IMR-90 (cell line): ENCODE measurements at regions of chr21 and their contacts with region 1.

Region 1: GRCh38 chr21:21232320-21232719 is 234.1 kb downstream of the NCAM2 start:
- DNase-seq: peak; percentile 71
- ATAC-seq: peak; percentile 68
- H3K4me3 ChIP-seq: no peak overlapping the region
- H3K27ac ChIP-seq: no peak overlapping the region
- H3K4me1 ChIP-seq: no peaks in the 10 kb centered on the region
- H3K27me3 ChIP-seq: no peaks in the 10 kb centered on the region
- CTCF ChIP-seq: peak; percentile 79
- POLR2A ChIP-seq: no peak
- RAD21 ChIP-seq: peak; percentile 91

Region 2: GRCh38 chr21:20874202-20874601 is 358.1 kb before region 1 on chr21:
- CTCF ChIA-PET with region 1: no interaction called
- POLR2A ChIA-PET with region 1: no interaction called
- dilution Hi-C with region 1: no loop called
- in situ Hi-C with region 1: no loop called
- intact Hi-C with region 1: no loop called
- DNase-seq: no peak
- ATAC-seq: no peak
- H3K4me3 ChIP-seq: no peak overlapping the region
- H3K27ac ChIP-seq: no peak overlapping the region
- H3K4me1 ChIP-seq: no peaks in the 10 kb centered on the region
- H3K27me3 ChIP-seq: no peaks in the 10 kb centered on the region
- CTCF ChIP-seq: no peak
- POLR2A ChIP-seq: no peak
- RAD21 ChIP-seq: no peak

Region 3: GRCh38 chr21:21163904-21164303 is 68.4 kb before region 1 on chr21:
- CTCF ChIA-PET with region 1: no interaction called
- POLR2A ChIA-PET with region 1: no interaction called
- dilution Hi-C with region 1: no loop called
- in situ Hi-C with region 1: no loop called
- intact Hi-C with region 1: loop called (anchors 2 kb)
- DNase-seq: peak; percentile 82
- ATAC-seq: peak; percentile 54
- H3K4me3 ChIP-seq: no peak overlapping the region
- H3K27ac ChIP-seq: peak overlapping the region; percentile 40; the same call in 1 of the 2 replicates
- H3K4me1 ChIP-seq: peaks cover 4% of the 10 kb centered on the region
- H3K27me3 ChIP-seq: no peaks in the 10 kb centered on the region
- CTCF ChIP-seq: peak; percentile 69
- POLR2A ChIP-seq: no peak
- RAD21 ChIP-seq: peak; percentile 76

Region 4: DNA sequence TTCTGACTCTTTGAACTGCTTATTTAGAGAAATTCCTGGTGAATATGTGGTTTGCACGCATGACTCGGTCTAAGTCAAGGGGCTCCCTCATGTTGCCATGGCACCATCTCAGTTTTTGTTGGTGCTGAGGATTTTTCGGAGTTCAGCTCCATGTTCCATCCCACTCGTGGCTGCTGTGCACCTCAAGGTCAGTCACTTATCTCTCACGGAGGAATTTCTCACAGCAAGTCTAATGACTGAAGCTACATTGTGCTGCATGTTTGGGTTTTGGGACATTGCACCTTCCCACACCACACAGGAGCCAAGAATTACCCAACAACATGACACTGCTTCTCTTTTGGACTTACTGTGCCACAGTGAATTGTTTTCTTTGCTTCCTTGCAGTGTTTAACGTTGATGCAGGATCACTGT is 35.7 kb after region 1 on chr21:
- CTCF ChIA-PET with region 1: no interaction called
- POLR2A ChIA-PET with region 1: no interaction called
- dilution Hi-C with region 1: no loop called
- in situ Hi-C with region 1: no loop called
- intact Hi-C with region 1: no loop called
- DNase-seq: peak; percentile 4
- ATAC-seq: no peak
- H3K4me3 ChIP-seq: no peak overlapping the region
- H3K27ac ChIP-seq: no peak overlapping the region
- H3K4me1 ChIP-seq: no peaks in the 10 kb centered on the region
- H3K27me3 ChIP-seq: no peaks in the 10 kb centered on the region
- CTCF ChIP-seq: no peak
- POLR2A ChIP-seq: no peak
- RAD21 ChIP-seq: no peak

Region 5: DNA sequence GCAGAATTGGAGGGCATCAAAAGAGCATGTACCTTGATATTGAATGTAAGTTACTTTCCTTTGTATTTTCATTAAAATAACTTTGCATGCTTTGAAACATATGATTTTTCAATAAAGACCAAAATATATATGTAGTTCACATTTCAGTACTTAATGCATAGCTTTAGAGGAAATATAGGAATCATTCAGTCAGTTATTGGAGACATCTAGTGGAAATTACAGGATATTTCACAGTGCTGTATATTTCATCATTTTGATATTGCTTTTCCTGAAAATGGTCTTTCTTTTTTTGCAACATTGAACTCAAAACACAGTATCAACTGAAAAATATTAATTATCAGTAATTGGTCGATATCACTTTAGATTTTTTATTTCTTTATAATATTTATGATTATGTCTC is 141.6 kb after region 1 on chr21:
- CTCF ChIA-PET with region 1: no interaction called
- POLR2A ChIA-PET with region 1: no interaction called
- dilution Hi-C with region 1: no loop called
- in situ Hi-C with region 1: no loop called
- intact Hi-C with region 1: loop called (anchors 1 kb)
- DNase-seq: no peak
- ATAC-seq: peak; percentile 42; the same call in 1 of the 2 replicates
- H3K4me3 ChIP-seq: no peak overlapping the region
- H3K27ac ChIP-seq: no peak overlapping the region
- H3K4me1 ChIP-seq: no peaks in the 10 kb centered on the region
- H3K27me3 ChIP-seq: no peaks in the 10 kb centered on the region
- CTCF ChIP-seq: peak; percentile 44
- POLR2A ChIP-seq: no peak
- RAD21 ChIP-seq: peak; percentile 44

Region 6: DNA sequence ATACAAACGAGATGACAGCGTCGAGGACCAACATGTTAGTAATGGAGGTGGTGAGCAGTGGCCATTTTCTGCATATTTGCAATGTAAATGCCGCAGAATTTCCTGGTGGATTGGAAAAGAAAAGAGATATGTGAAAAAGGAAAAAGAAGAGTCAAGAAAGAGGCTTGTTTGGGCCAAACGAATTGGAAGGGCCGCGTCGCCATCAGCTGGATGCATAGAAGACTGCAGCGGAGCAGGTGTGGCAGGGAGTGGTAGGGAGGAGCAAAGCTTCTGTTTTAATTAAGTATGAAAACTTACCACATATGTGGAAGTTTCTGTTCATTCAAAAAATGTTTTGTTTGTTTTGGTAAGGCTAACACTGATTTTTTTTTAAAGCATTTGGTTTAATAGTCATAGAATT is 456.6 kb after region 1 on chr21:
- CTCF ChIA-PET with region 1: interaction called, 4 read pairs
- POLR2A ChIA-PET with region 1: no interaction called
- dilution Hi-C with region 1: no loop called
- in situ Hi-C with region 1: loop called (anchors 25 kb)
- intact Hi-C with region 1: loop called (anchors 2 kb)
- DNase-seq: peak; percentile 37
- ATAC-seq: peak; percentile 77
- H3K4me3 ChIP-seq: no peak overlapping the region
- H3K27ac ChIP-seq: no peak overlapping the region
- H3K4me1 ChIP-seq: no peaks in the 10 kb centered on the region
- H3K27me3 ChIP-seq: no peaks in the 10 kb centered on the region
- CTCF ChIP-seq: peak; percentile 61
- POLR2A ChIP-seq: no peak
- RAD21 ChIP-seq: peak; percentile 77

Region 7: DNA sequence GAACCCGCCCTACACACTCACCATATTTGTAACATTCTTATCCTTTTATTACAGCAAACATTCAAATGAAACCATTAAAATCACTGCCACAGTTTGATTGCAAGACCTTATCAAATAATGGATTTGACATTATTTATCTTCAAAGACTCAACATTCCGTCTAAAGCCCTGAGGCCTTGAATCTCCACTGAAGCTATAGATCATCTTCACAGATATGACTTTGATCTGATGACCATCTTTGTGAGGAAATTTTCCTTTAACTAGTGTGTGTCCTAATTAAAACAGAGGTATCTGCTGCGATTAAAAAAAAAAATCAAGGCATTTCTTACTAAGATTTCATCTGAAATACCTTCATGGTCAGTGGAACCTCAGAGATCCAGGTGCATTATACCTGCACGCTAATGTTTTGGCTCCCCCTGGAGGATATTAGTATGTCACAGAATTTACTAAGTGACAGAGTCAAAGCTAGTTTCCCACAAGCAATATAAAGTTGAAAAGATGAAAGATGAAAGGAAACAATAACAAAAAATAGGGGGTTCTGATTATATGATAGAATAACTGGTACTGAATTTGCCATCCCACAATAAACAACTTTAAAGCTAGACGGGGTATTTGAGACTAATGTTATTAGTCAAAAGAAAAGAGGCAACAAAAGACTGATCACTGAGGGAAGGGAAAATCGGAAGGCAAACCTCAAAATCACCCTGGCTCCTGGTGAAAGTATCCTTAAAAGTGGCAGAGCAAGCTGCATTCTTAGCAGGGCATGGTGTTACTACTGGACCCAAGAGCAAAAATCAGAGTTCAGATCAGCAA is 689.3 kb after region 1 on chr21:
- CTCF ChIA-PET with region 1: interaction called, 7 read pairs
- POLR2A ChIA-PET with region 1: no interaction called
- dilution Hi-C with region 1: no loop called
- in situ Hi-C with region 1: loop called (anchors 10 kb)
- intact Hi-C with region 1: loop called (anchors 1 kb)
- DNase-seq: peak; percentile 11
- ATAC-seq: peak; percentile 46; the same call in 1 of the 2 replicates
- H3K4me3 ChIP-seq: no peak overlapping the region
- H3K27ac ChIP-seq: no peak overlapping the region
- H3K4me1 ChIP-seq: no peaks in the 10 kb centered on the region
- H3K27me3 ChIP-seq: no peaks in the 10 kb centered on the region
- CTCF ChIP-seq: peak; percentile 53
- POLR2A ChIP-seq: no peak
- RAD21 ChIP-seq: peak; percentile 72